ENCODE measurements at regions of chr12 and their contacts with region 1.

Region 1: DNA sequence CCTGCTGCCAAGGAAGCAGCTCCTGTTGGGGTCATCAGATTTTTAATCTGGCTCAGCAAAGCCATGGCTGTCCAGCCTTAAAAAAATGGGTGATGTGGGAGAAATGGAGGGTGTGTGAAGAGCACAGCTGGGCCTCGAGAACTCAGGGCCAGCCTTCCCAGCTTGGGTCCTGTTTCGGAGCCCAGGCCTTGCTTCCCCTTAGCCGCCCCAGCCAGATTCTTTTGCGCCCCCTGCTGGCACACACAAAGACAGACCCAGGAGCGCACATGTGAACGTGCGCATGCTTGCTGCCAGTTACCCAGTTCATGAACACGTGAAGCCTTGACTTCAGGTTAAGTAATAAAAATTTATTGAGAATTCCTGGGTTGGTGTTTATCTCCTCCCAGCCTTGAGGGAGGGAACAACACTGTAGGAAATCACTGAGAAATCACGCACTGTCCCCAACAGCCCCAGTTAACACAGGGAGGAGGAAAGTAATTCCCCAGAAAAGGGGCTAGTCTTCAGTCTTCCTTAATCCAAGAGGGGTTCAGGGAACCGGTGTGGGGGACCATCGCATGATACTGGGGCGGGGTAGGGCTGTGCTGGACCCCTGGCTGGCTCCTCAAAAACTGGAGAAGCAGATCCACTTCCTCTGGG is 5.3 kb downstream of the PHB2 start:
- DNase-seq: peak; percentile 81 to 90
- ATAC-seq: peak; percentile 56 to 83 (median 81)
- H3K4me3 ChIP-seq: no peak overlapping the region
- H3K27ac ChIP-seq: peak overlapping the region in 9 of 10 donors; percentile 3 to 84 (median 74)
- H3K4me1 ChIP-seq: peaks cover 25 to 66% (median 55%) of the 10 kb centered on the region in 9 donors
- H3K27me3 ChIP-seq: no peaks in the 10 kb centered on the region
- CTCF ChIP-seq: peak; percentile 75 to 97 (median 93)

Region 2: GRCh38 chr12:5783289-5783920 is 1181.7 kb before region 1 on chr12:
- intact Hi-C with region 1: no loop called
- DNase-seq: no peak
- ATAC-seq: no peak
- H3K4me3 ChIP-seq: no peak overlapping the region
- H3K27ac ChIP-seq: no peak overlapping the region
- H3K4me1 ChIP-seq: peaks cover 0 to 37% (median 12%) of the 10 kb centered on the region in 9 donors
- H3K27me3 ChIP-seq: peaks cover 0 to 6% (median 0%) of the 10 kb centered on the region in 7 donors
- CTCF ChIP-seq: no peak

Region 3: GRCh38 chr12:6867413-6868210 is 97.5 kb before region 1 on chr12 and contains the start of gene TPI1:
- intact Hi-C with region 1: loop called in 2 of 10 experiments (anchors 2 to 5 kb)
- DNase-seq: peak; percentile 86 to 89
- ATAC-seq: peak; percentile 81 to 93 (median 88)
- H3K4me3 ChIP-seq: peak within 1 kb of the TSS; percentile 81 to 100 (median 98)
- H3K27ac ChIP-seq: peak within 1 kb of the TSS; percentile 93 to 100 (median 100)
- H3K4me1 ChIP-seq: peaks cover 32 to 53% (median 49%) of the 10 kb centered on the region in 9 donors
- H3K27me3 ChIP-seq: no peaks in the 10 kb centered on the region
- CTCF ChIP-seq: peak in 4 of 9 donors; percentile 11 to 24 (median 20)
- total RNA-seq, gene TPI1: 739 to 1,044 (median 839) TPM

Region 4: GRCh38 chr12:6921996-6922946 is 42.9 kb before region 1 on chr12:
- intact Hi-C with region 1: loop called in 4 of 10 experiments (anchors 1 to 5 kb)
- DNase-seq: no peak
- ATAC-seq: no peak
- H3K4me3 ChIP-seq: no peak overlapping the region
- H3K27ac ChIP-seq: peak overlapping the region in 1 of 10 donors; percentile 31
- H3K4me1 ChIP-seq: peaks cover 17 to 48% (median 35%) of the 10 kb centered on the region in 9 donors
- H3K27me3 ChIP-seq: peaks cover 0 to 5% (median 0%) of the 10 kb centered on the region in 7 donors
- CTCF ChIP-seq: no peak

Region 5: GRCh38 chr12:6944381-6945186 is 20.6 kb before region 1 on chr12:
- intact Hi-C with region 1: loop called in 7 of 10 experiments (anchors 1 to 2 kb)
- DNase-seq: peak; percentile 94 to 95
- ATAC-seq: peak; percentile 69 to 86 (median 79)
- H3K4me3 ChIP-seq: peak overlapping the region; percentile 56 to 96 (median 78)
- H3K27ac ChIP-seq: peak overlapping the region; percentile 84 to 99 (median 96)
- H3K4me1 ChIP-seq: peaks cover 18 to 73% (median 43%) of the 10 kb centered on the region in 9 donors
- H3K27me3 ChIP-seq: no peaks in the 10 kb centered on the region
- CTCF ChIP-seq: peak; percentile 68 to 97 (median 84)

Region 6: GRCh38 chr12:7092229-7092985 is 127.3 kb after region 1 on chr12 and contains the start of gene C1R:
- intact Hi-C with region 1: loop called in 2 of 10 experiments (anchors 5 kb)
- DNase-seq: peak; percentile 66 to 77
- ATAC-seq: peak; percentile 74 to 88 (median 84)
- H3K4me3 ChIP-seq: peak within 1 kb of the TSS; percentile 9 to 67 (median 58)
- H3K27ac ChIP-seq: peak within 1 kb of the TSS; percentile 46 to 84 (median 79)
- H3K4me1 ChIP-seq: peaks cover 0 to 26% (median 16%) of the 10 kb centered on the region in 9 donors
- H3K27me3 ChIP-seq: no peaks in the 10 kb centered on the region
- CTCF ChIP-seq: peak; percentile 83 to 94 (median 91)
- total RNA-seq, gene C1R: 19.9 to 238 (median 59.0) TPM

Region 7: GRCh38 chr12:7403466-7403865 is 438.3 kb after region 1 on chr12:
- intact Hi-C with region 1: no loop called
- DNase-seq: no peak
- ATAC-seq: no peak
- H3K4me3 ChIP-seq: no peak overlapping the region
- H3K27ac ChIP-seq: no peak overlapping the region
- H3K4me1 ChIP-seq: no peaks in the 10 kb centered on the region
- H3K27me3 ChIP-seq: peaks cover 0 to 5% (median 0%) of the 10 kb centered on the region in 7 donors
- CTCF ChIP-seq: no peak